ENCODE measurements at regions of chr7 and their contacts with region 1.

Region 1: GRCh38 chr7:158704704-158705468 is at the start of gene NCAPG2:
- DNase-seq: peak; percentile 98
- H3K4me3 Mint-ChIP-seq: peak within 1 kb of the TSS; percentile 84
- H3K27ac Mint-ChIP-seq: peak within 1 kb of the TSS; percentile 82
- H3K4me1 Mint-ChIP-seq: peaks cover 40% of the 10 kb centered on the region
- H3K27me3 Mint-ChIP-seq: no peaks in the 10 kb centered on the region
- total RNA-seq, gene NCAPG2: 145 to 149 TPM

Region 2: DNA sequence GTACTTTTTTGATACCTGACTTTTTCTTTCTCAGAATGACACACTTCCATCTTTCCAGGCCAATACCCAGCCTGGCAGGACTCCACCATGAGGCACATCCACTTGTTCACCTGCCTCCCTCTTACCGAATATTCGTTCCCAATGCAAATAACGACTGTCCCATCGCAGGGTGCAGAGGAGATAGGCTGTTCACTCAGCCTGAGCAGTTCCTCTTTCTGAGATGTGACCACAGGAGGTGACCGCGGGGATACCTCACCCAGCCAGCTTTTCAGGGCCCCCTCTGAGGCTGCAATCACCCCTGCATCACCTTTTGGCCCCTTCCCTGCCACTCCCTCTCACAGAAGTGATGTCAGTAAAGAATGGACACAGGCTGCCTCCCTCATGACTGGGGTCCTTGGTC is 145.5 kb before region 1 on chr7:
- CTCF ChIA-PET with region 1: no interaction called
- POLR2A ChIA-PET with region 1: no interaction called
- intact Hi-C with region 1: no loop called
- DNase-seq: no peak
- H3K4me3 Mint-ChIP-seq: no peak overlapping the region
- H3K27ac Mint-ChIP-seq: no peak overlapping the region
- H3K4me1 Mint-ChIP-seq: no peaks in the 10 kb centered on the region
- H3K27me3 Mint-ChIP-seq: peaks cover 9% of the 10 kb centered on the region

Region 3: DNA sequence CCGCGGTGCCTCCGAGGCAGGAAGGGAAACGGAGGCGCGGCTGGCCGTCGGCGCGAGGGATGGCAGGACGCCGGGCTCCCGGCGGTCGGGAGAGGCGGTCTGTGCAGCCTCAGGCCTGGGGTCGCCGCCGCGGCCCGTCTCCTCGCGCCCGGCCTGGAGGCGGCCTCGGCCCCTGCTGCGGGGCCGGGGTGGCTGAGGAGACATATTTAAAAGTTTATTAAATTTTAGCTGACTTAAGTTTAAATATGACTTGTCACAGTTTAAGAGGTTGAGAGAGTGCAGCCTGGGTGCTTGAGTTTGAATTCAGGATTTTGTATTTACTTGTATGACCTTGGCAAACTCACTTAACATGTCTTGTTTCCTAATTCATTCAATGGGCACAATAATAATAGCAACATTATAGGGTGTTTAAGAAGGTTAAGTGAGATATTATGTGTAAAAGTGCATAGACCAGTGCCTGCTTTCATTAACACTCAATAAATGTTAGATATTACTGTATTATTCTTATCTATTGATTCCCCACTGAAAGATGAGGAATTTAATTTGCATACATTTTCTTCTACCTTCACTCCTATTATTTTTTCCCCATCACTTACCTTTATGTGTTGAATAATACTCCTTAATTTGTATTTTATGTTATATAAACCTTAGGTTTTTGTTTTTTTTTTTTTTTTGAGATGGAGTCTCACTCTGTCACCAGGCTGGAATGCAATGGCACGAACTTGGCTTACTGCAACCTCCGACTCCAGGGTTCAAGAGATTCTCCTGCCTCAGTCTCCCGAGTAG is 152.2 kb after region 1 on chr7:
- CTCF ChIA-PET with region 1: no interaction called
- POLR2A ChIA-PET with region 1: no interaction called
- intact Hi-C with region 1: loop called (anchors 1 kb)
- DNase-seq: no peak
- H3K4me3 Mint-ChIP-seq: peak overlapping the region; percentile 98
- H3K27ac Mint-ChIP-seq: peak overlapping the region; percentile 45
- H3K4me1 Mint-ChIP-seq: peaks cover 19% of the 10 kb centered on the region
- H3K27me3 Mint-ChIP-seq: no peaks in the 10 kb centered on the region